ENCODE measurements at regions of chr5 and their contacts with region 1.

Region 1: GRCh38 chr5:160021831-160022446 is 13.0 kb downstream of the TTC1 start:
- DNase-seq: peak; percentile 58
- H3K4me3 ChIP-seq: no peak overlapping the region
- H3K27ac ChIP-seq: no peak overlapping the region
- H3K4me1 ChIP-seq: peaks cover 0 to 3% of the 10 kb centered on the region in 2 experiments; a peak in 2 of 4 replicates
- H3K27me3 ChIP-seq: no peaks in the 10 kb centered on the region
- CTCF ChIP-seq: peak; percentile 83
- EP300 ChIP-seq: no peak
- RAD21 ChIP-seq: peak; percentile 88

Region 2: GRCh38 chr5:159712672-159713071 is 309.3 kb before region 1 on chr5:
- CTCF ChIA-PET with region 1: no interaction called
- POLR2A ChIA-PET with region 1: no interaction called
- DNase-seq: no peak
- H3K4me3 ChIP-seq: no peak overlapping the region
- H3K27ac ChIP-seq: no peak overlapping the region
- H3K4me1 ChIP-seq: no peaks in the 10 kb centered on the region
- H3K27me3 ChIP-seq: no peaks in the 10 kb centered on the region
- CTCF ChIP-seq: no peak
- EP300 ChIP-seq: no peak
- RAD21 ChIP-seq: no peak

Region 3: GRCh38 chr5:160039810-160040470 is 18.0 kb after region 1 on chr5:
- CTCF ChIA-PET with region 1: interaction called, 22 read pairs
- POLR2A ChIA-PET with region 1: no interaction called
- DNase-seq: no peak
- H3K4me3 ChIP-seq: no peak overlapping the region
- H3K27ac ChIP-seq: no peak overlapping the region
- H3K4me1 ChIP-seq: peaks cover 0 to 8% of the 10 kb centered on the region in 2 experiments; a peak in 1 of 4 replicates
- H3K27me3 ChIP-seq: no peaks in the 10 kb centered on the region
- CTCF ChIP-seq: no peak
- EP300 ChIP-seq: no peak
- RAD21 ChIP-seq: no peak

Region 4: GRCh38 chr5:160081495-160081894 is 59.6 kb after region 1 on chr5:
- CTCF ChIA-PET with region 1: interaction called, 10 read pairs
- POLR2A ChIA-PET with region 1: no interaction called
- DNase-seq: no peak
- H3K4me3 ChIP-seq: no peak overlapping the region
- H3K27ac ChIP-seq: peak overlapping the region in 1 of 2 experiments; percentile 72; a peak in 1 of 4 replicates
- H3K4me1 ChIP-seq: peaks cover 0 to 29% of the 10 kb centered on the region in 2 experiments; a peak in 3 of 4 replicates
- H3K27me3 ChIP-seq: no peaks in the 10 kb centered on the region
- CTCF ChIP-seq: no peak
- EP300 ChIP-seq: no peak
- RAD21 ChIP-seq: no peak

Region 5: DNA sequence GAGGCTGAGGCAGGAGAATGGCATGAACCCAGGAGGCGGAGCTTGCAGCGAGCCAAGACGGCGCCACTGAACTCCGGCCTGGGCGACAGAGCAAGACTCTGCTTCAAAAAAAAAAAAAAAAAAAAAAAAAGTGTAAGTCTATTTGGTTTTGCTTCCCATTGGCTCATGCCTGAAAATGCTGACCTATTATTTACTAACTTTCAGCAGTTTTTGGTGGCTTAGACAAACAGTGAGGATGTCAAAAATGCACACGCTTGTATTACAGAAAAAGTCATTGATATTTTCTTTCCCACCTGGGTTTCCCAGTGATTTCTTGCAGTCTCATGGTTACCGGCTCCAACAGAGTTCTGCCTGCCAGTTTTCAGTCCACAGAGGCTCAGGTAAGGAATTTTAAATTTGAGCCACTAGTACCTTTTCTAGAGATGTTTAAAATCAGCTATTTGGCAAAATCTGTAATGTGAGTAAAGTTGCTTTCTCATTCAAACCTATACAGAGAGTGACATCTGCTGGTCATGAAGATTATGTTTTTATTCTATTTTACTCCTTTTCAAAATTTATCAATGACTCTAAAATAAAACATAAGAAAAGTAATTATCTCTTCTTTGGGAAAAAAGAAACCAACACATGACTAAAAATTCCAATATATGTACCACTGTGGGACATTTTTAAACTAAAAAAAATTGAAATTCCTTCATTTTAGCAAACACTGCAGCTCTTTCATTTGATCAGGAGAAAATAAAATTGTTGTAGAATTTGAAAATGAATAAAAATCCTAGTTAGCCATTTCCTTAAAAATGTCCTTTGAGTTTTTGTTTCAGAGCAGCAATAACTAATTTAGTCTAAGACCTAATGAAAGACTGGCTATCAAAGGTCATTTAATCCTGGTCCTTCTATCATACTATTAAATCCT is 369.1 kb after region 1 on chr5:
- CTCF ChIA-PET with region 1: interaction called, 99 read pairs
- POLR2A ChIA-PET with region 1: no interaction called
- DNase-seq: no peak
- H3K4me3 ChIP-seq: no peak overlapping the region
- H3K27ac ChIP-seq: no peak overlapping the region
- H3K4me1 ChIP-seq: peaks cover 0 to 3% of the 10 kb centered on the region in 2 experiments; a peak in 2 of 4 replicates
- H3K27me3 ChIP-seq: no peaks in the 10 kb centered on the region
- CTCF ChIP-seq: peak; percentile 76
- EP300 ChIP-seq: no peak
- RAD21 ChIP-seq: peak; percentile 77

Region 6: DNA sequence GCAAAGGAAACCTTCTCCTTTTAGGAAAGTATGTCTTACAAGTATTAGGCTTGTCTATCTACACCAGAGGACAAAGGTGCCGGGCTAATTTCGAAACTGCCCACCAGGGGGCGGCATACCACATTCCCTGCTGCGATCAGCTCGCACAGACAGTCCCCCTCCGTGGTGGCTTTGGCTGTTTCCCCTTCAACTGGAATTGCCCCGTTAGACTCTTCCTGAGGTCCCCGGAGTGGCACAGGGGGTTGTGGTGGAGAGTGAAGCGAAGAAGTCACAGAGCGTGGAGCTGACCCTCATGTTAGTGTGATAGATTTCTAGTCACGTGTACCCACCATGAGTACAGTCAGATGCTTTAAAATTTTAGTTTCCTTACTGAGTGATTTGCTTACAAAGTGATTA is 417.3 kb after region 1 on chr5:
- CTCF ChIA-PET with region 1: interaction called, 10 read pairs
- POLR2A ChIA-PET with region 1: no interaction called
- DNase-seq: peak; percentile 77
- H3K4me3 ChIP-seq: peak overlapping the region; percentile 51 to 65
- H3K27ac ChIP-seq: no peak overlapping the region
- H3K4me1 ChIP-seq: peaks cover 0 to 9% of the 10 kb centered on the region in 2 experiments; a peak in 2 of 4 replicates
- H3K27me3 ChIP-seq: no peaks in the 10 kb centered on the region
- CTCF ChIP-seq: peak; percentile 95
- EP300 ChIP-seq: no peak
- RAD21 ChIP-seq: peak; percentile 61

Measured in SK-N-SH (cell line).